Activated CD4-positive, alpha-beta T cell treated with anti-CD3 and anti-CD28 coated beads, Interleukin-2, amount 10 ng/mL, durations not matched to agents 24 days and 14 days (primary cell): ENCODE measurements at regions of chr4 and their contacts with region 1.

Region 1: DNA sequence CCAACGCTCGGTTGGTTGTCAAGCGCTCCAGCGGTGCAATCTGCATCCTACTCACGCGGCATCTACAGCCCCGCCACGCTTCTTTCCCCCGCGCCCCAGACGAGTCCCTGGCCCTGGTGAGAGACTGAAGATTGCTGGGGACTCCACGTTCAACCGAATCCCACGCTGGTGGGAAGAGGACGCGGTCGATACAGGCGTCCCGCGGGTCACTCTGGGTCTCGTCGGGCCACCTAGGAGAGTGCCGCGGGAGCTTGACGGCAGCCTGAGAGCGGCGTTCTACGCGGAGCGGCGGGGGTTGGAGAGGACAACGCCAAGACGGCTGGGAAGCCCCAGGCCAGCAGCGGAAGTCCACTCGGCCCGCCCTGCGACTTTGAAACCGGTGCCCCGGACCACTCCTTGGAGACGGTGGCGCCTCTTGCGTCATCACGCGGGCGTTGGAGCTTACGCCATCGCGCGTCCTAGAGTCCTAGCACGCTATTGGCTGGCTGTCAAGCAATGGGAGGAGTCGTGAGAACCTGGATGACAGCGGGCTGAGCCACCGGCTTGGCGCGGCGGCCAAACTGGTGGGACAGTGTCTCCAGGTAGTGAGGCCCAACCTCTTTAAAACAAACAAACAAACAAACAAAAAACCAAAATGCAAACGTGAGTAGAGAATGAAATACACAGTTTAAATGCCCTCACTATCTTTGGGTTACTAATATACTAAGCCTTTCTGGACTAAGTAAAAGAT is at the start of gene SCLT1:
- DNase-seq: peak; percentile 99
- H3K4me3 Mint-ChIP-seq: peak within 1 kb of the TSS; percentile 53
- H3K27ac Mint-ChIP-seq: peak within 1 kb of the TSS; percentile 31
- H3K4me1 Mint-ChIP-seq: peaks cover 42% of the 10 kb centered on the region
- H3K27me3 Mint-ChIP-seq: no peaks in the 10 kb centered on the region
- total RNA-seq, gene SCLT1: 24.2 and 25.4 TPM in 2 replicates

Region 2: GRCh38 chr4:127880764-127881562 is 1212.4 kb before region 1 on chr4 and contains the start of gene PLK4:
- intact Hi-C with region 1: loop called (anchors 1 kb)
- DNase-seq: peak; percentile 99
- H3K4me3 Mint-ChIP-seq: peak within 1 kb of the TSS; percentile 97
- H3K27ac Mint-ChIP-seq: peak within 1 kb of the TSS; percentile 93
- H3K4me1 Mint-ChIP-seq: peaks cover 25% of the 10 kb centered on the region
- H3K27me3 Mint-ChIP-seq: peaks cover 2% of the 10 kb centered on the region
- total RNA-seq, gene PLK4: 44.5 and 44.7 TPM in 2 replicates

Region 3: DNA sequence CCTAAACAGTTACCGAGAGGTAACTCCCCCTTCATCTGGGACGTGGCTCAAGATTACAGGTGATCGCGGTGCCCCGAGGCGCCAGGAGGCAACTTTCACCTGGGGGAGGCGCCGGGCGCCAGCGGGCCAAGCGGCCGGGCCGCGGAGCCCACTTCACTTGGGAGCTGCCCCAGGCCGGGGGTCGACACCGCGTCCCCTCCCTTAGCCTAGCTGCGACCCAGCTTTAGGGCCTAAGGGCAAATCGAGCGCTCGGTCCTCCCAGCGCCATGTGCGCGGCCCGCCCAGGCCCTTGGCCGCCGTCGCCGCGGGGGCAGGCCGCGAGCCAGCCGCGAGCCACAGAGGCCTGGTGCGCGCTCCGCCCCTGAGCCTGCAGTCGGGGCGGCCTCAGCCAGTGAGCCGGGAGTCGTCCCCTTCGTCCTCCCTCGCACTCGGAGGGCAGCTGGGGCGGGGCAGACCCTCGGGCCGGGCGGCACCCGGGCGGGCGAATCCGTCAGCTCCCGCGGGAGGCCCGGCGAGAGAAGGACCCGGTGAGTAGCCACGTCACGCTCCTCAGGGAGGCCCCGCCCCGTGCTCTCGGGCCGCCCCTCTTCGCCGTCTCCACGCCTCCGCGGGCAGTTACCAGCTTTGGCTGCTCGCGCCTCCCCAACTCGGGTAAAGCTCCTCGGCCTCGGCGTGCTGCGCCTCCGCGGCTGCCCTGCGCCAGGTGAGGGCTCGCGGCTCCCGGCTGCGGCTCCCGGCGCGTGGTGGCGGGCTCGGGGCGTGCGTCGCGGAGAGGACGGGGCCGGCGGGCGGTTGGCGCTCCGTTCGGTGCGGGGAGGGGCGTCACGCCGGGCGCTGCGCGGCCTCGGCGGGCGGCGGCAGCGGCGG is 1032.4 kb before region 1 on chr4 and contains the start of gene LARP1B:
- intact Hi-C with region 1: loop called (anchors 10 kb)
- DNase-seq: peak; percentile 98
- H3K4me3 Mint-ChIP-seq: peak within 1 kb of the TSS; percentile 90
- H3K27ac Mint-ChIP-seq: peak within 1 kb of the TSS; percentile 94
- H3K4me1 Mint-ChIP-seq: peaks cover 11% of the 10 kb centered on the region
- H3K27me3 Mint-ChIP-seq: peaks cover 3% of the 10 kb centered on the region
- total RNA-seq, gene LARP1B: 31.1 and 32.6 TPM in 2 replicates

Region 4: GRCh38 chr4:128831531-128832242 is 261.7 kb before region 1 on chr4:
- intact Hi-C with region 1: no loop called
- DNase-seq: no peak
- H3K4me3 Mint-ChIP-seq: no peak overlapping the region
- H3K27ac Mint-ChIP-seq: no peak overlapping the region
- H3K4me1 Mint-ChIP-seq: peaks cover 26% of the 10 kb centered on the region
- H3K27me3 Mint-ChIP-seq: no peaks in the 10 kb centered on the region

Region 5: DNA sequence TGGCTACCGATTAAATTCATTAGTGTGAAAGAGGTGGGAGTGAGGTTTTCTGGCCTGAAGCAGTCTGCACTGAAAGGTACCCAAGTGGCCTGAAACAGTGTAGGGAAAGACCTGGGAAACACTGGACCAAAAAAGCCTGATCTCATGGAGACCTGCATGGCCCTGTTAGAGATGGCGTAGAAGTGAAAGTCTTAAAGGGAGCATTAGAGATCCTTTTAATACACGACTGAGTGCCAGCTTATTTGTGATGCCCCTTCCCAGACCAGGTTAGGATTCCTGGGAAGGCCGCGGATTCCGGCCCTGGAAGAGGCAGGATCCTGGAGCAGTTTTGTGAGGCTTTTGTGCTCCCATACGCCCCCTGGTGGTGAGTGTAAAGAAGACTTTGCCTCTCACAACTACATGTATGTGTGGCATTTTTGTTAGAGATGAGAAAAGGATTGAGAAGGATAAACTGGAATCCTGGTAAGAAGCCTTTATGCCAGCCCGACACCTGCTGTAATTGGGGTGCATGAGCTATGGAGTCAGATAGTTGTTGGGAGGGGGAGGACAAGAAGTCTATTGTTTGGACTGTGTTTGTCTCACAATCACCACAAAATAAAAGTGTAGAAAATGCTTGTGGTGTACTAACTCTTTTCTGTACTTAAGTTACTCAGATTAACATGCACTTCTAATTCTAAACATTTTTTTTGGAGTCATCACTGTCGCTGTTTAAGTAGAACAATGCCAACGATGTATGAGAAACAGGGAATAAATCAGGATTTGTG is 229.9 kb before region 1 on chr4:
- intact Hi-C with region 1: loop called (anchors 2 kb)
- DNase-seq: peak; percentile 88
- H3K4me3 Mint-ChIP-seq: peak overlapping the region; percentile 42
- H3K27ac Mint-ChIP-seq: peak overlapping the region; percentile 86
- H3K4me1 Mint-ChIP-seq: peaks cover 44% of the 10 kb centered on the region
- H3K27me3 Mint-ChIP-seq: no peaks in the 10 kb centered on the region

Region 6: GRCh38 chr4:129046055-129046959 is 47.0 kb before region 1 on chr4:
- intact Hi-C with region 1: loop called (anchors 2 kb)
- DNase-seq: no peak
- H3K4me3 Mint-ChIP-seq: no peak overlapping the region
- H3K27ac Mint-ChIP-seq: no peak overlapping the region
- H3K4me1 Mint-ChIP-seq: peaks cover 8% of the 10 kb centered on the region
- H3K27me3 Mint-ChIP-seq: no peaks in the 10 kb centered on the region

Region 7: GRCh38 chr4:129282293-129282692 is 188.9 kb after region 1 on chr4:
- intact Hi-C with region 1: no loop called
- DNase-seq: no peak
- H3K4me3 Mint-ChIP-seq: no peak overlapping the region
- H3K27ac Mint-ChIP-seq: no peak overlapping the region
- H3K4me1 Mint-ChIP-seq: no peaks in the 10 kb centered on the region
- H3K27me3 Mint-ChIP-seq: no peaks in the 10 kb centered on the region